ENCODE measurements at regions of chr17 and their contacts with region 1.

Region 1: GRCh38 chr17:47720754-47721533 is 12.1 kb upstream of the TBX21 start:
- DNase-seq: peak; percentile 90
- ATAC-seq: peak; percentile 77
- H3K4me3 Mint-ChIP-seq: peak overlapping the region; percentile 60
- H3K27ac Mint-ChIP-seq: peak overlapping the region; percentile 88
- H3K4me1 Mint-ChIP-seq: peaks cover 81% of the 10 kb centered on the region
- H3K27me3 Mint-ChIP-seq: no peaks in the 10 kb centered on the region

Region 2: GRCh38 chr17:47604598-47604927 is 116.4 kb before region 1 on chr17:
- CTCF ChIA-PET with region 1: no interaction called
- POLR2A ChIA-PET with region 1: no interaction called
- DNase-seq: no peak
- ATAC-seq: no peak
- H3K4me3 Mint-ChIP-seq: no peak overlapping the region
- H3K27ac Mint-ChIP-seq: no peak overlapping the region
- H3K4me1 Mint-ChIP-seq: no peaks in the 10 kb centered on the region
- H3K27me3 Mint-ChIP-seq: no peaks in the 10 kb centered on the region

Region 3: GRCh38 chr17:47707056-47707804 is 13.7 kb before region 1 on chr17:
- CTCF ChIA-PET with region 1: interaction called, 474 read pairs
- POLR2A ChIA-PET with region 1: interaction called, 6 read pairs
- DNase-seq: no peak
- ATAC-seq: no peak
- H3K4me3 Mint-ChIP-seq: peak overlapping the region; percentile 15
- H3K27ac Mint-ChIP-seq: peak overlapping the region; percentile 92
- H3K4me1 Mint-ChIP-seq: peaks cover 72% of the 10 kb centered on the region
- H3K27me3 Mint-ChIP-seq: no peaks in the 10 kb centered on the region

Measured in activated CD8-positive, alpha-beta T cell treated with anti-CD3 and anti-CD28 coated beads, Interleukin-2, amount 10 ng/mL, durations not matched to agents 7 days and 5 days (primary cell).